ENCODE measurements at regions of chr10 and their contacts with region 1.

Region 1: DNA sequence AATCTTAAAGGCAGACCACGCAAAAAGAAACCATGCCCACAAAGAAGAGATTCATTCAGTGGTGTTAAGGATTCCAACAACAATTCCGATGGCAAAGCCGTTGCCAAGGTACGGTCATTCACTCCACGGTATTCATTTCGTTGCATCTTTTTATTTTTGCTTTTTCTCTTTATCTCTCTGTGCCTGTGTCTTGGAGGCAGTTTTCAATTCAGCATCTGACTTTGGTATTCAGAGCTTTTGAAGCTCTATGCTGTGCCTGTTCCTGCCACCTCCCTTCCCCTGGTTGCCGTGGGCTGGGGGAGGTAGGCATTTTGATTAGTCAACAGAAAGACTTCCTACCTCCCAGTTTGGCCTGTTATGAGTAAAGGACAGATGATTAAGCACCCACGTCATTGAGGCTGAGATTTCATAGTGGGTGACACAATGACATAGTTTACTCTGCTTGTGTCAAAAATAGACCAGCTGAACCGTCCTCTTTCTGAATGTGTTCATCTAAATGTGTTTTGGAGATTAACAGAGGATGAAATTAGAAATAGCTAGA is 149.5 kb downstream of the ARID5B start:
- DNase-seq: peak; percentile 31 to 83
- ATAC-seq: peak; percentile 48 to 85 (median 78)
- H3K4me3 ChIP-seq: peak overlapping the region in 9 of 10 donors; percentile 42 to 68 (median 59)
- H3K27ac ChIP-seq: peak overlapping the region; percentile 88 to 98 (median 94)
- H3K4me1 ChIP-seq: peaks cover 16 to 91% (median 77%) of the 10 kb centered on the region in 9 donors
- H3K27me3 ChIP-seq: no peaks in the 10 kb centered on the region
- CTCF ChIP-seq: no peak

Region 2: GRCh38 chr10:62082729-62083411 is 31.9 kb after region 1 on chr10:
- intact Hi-C with region 1: loop called in 6 of 10 experiments (anchors 2 to 5 kb)
- DNase-seq: peak in 1 of 2 donors; percentile 43
- ATAC-seq: peak; percentile 36 to 68 (median 54)
- H3K4me3 ChIP-seq: peak overlapping the region in 7 of 10 donors; percentile 1 to 27 (median 17)
- H3K27ac ChIP-seq: peak overlapping the region; percentile 63 to 93 (median 88)
- H3K4me1 ChIP-seq: peaks cover 18 to 69% (median 59%) of the 10 kb centered on the region in 9 donors
- H3K27me3 ChIP-seq: no peaks in the 10 kb centered on the region
- CTCF ChIP-seq: no peak

Region 3: GRCh38 chr10:62095181-62096071 is 44.5 kb after region 1 on chr10:
- intact Hi-C with region 1: loop called in 2 of 10 experiments (anchors 5 to 10 kb)
- DNase-seq: no peak
- ATAC-seq: peak in 4 of 8 donors; percentile 16 to 42 (median 40)
- H3K4me3 ChIP-seq: no peak overlapping the region
- H3K27ac ChIP-seq: peak overlapping the region in 7 of 10 donors; percentile 28 to 75 (median 55)
- H3K4me1 ChIP-seq: peaks cover 0 to 48% (median 38%) of the 10 kb centered on the region in 9 donors
- H3K27me3 ChIP-seq: no peaks in the 10 kb centered on the region
- CTCF ChIP-seq: no peak

Region 4: GRCh38 chr10:62130948-62131347 is 80.0 kb after region 1 on chr10:
- intact Hi-C with region 1: loop called in 1 of 10 experiments (anchors 5 kb)
- DNase-seq: peak in 1 of 2 donors; percentile 72
- ATAC-seq: peak; percentile 38 to 94 (median 88)
- H3K4me3 ChIP-seq: no peak overlapping the region
- H3K27ac ChIP-seq: peak overlapping the region in 9 of 10 donors; percentile 14 to 75 (median 65)
- H3K4me1 ChIP-seq: peaks cover 0 to 28% (median 12%) of the 10 kb centered on the region in 9 donors
- H3K27me3 ChIP-seq: no peaks in the 10 kb centered on the region
- CTCF ChIP-seq: no peak

Measured in heart right ventricle (tissue), 16 donors.